H1 (cell line): ENCODE measurements at regions of chr4 and their contacts with region 1.

Region 1: GRCh38 chr4:147526272-147526654 is 45.4 kb downstream of the EDNRA start:
- DNase-seq: no peak
- H3K4me3 ChIP-seq: no peak overlapping the region
- H3K27ac ChIP-seq: no peak overlapping the region
- H3K4me1 ChIP-seq: no peaks in the 10 kb centered on the region
- H3K27me3 ChIP-seq: no peaks in the 10 kb centered on the region
- CTCF ChIP-seq: peak in 2 of 3 experiments; percentile 43 to 47; a peak in 3 of 4 replicates
- EP300 ChIP-seq: no peak
- POLR2A ChIP-seq: no peak
- RAD21 ChIP-seq: peak; percentile 56

Region 2: DNA sequence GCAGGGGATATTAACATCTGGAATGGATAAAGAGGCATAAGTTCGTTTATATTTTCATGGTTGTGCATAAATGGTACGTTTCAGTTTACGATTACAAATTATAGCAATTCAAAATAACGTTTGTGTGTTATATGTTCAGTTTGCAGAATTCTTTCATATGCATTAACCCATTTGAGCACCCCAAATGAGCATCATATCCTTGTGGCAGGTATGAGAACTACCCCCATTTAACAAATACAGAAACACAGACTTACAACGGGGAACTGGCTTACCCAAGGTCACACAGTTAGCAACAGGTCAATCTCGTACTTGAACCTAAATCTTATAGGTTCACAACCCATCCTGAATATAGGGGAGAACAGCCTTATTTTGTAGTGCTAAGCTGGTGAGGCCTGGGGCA is 12.3 kb before region 1 on chr4:
- CTCF ChIA-PET with region 1: interaction called, 22 read pairs
- POLR2A ChIA-PET with region 1: no interaction called
- DNase-seq: no peak
- H3K4me3 ChIP-seq: no peak overlapping the region
- H3K27ac ChIP-seq: no peak overlapping the region
- H3K4me1 ChIP-seq: 0 out of 7 replicates have a peak, but pooled peaks cover 0 to 3% (median 0%) of the 10 kb centered on the region in 4 experiments
- H3K27me3 ChIP-seq: no peaks in the 10 kb centered on the region
- CTCF ChIP-seq: peak in 1 of 3 experiments; percentile 30; a peak in 1 of 4 replicates
- EP300 ChIP-seq: no peak
- POLR2A ChIP-seq: no peak
- RAD21 ChIP-seq: no peak